Activated T-helper 2 cell treated with anti-CD3 and anti-CD28 coated beads, Interferon-gamma antibody, Interleukin-2, Interleukin-4, amounts not matched to agents 10 μg/mL and 5 μg/mL and 100 μg/mL, durations not matched to agents 14 hours and 24 hours and 36 hours (primary cell): ENCODE measurements at regions of chr14 and their contacts with region 1.

Region 1: DNA sequence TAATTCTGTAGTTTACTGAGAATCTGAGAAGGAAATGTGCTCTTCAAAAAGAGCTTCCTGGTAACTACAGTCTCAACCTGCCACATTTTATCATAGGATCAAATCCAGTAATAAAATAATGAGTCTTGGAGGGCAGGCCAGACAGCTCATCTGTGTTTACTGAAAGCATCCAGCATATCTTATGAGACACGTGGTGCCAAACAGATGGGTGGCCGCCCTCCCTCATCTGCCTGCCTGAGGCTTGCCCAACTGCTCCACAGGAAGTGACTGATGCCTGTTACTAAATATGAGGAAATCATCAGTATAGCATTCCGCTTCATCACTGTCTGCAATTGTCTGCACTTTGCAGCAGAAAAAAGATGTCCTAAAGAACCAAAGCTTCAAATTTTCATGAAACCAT is 13.5 kb downstream of the DHRS7 start:
- DNase-seq: peak; percentile 67
- H3K4me3 Mint-ChIP-seq: no peak overlapping the region
- H3K27ac Mint-ChIP-seq: peak overlapping the region; percentile 89
- H3K4me1 Mint-ChIP-seq: peaks cover 33% of the 10 kb centered on the region
- H3K27me3 Mint-ChIP-seq: no peaks in the 10 kb centered on the region

Region 2: DNA sequence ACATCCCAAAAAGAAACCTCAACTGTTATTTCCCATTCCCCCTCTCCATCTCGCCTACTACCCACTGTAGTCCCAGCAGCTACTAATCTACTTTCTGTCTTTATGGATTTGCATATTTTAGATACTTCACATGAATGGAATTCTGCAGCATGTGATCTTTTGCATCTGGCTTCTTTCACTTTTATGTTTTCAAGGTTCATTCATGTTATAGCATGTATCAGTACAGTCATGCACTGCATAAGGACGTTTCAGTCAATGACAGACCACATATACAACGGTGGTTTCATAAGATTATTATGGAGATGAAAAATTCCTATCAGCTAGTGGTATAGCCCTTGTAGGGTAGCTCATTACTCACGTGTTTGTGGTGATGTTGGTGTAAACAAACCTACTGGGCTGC is 35.5 kb before region 1 on chr14:
- intact Hi-C with region 1: loop called (anchors 5 kb)
- DNase-seq: no peak
- H3K4me3 Mint-ChIP-seq: no peak overlapping the region
- H3K27ac Mint-ChIP-seq: no peak overlapping the region
- H3K4me1 Mint-ChIP-seq: peaks cover 10% of the 10 kb centered on the region
- H3K27me3 Mint-ChIP-seq: no peaks in the 10 kb centered on the region

Region 3: GRCh38 chr14:60164712-60165546 is 13.2 kb after region 1 on chr14 and contains the start of gene DHRS7:
- intact Hi-C with region 1: loop called (anchors 1 kb)
- DNase-seq: peak; percentile 58
- H3K4me3 Mint-ChIP-seq: peak within 1 kb of the TSS; percentile 94
- H3K27ac Mint-ChIP-seq: peak within 1 kb of the TSS; percentile 95
- H3K4me1 Mint-ChIP-seq: peaks cover 25% of the 10 kb centered on the region
- H3K27me3 Mint-ChIP-seq: no peaks in the 10 kb centered on the region
- total RNA-seq, gene DHRS7: 52.9 and 55.8 TPM in 2 replicates